Activated naive CD8-positive, alpha-beta T cell treated with anti-CD3 and anti-CD28 coated beads, Interleukin-2, amount 10 ng/mL, durations not matched to agents 7 days and 5 days (primary cell): ENCODE measurements at regions of chr3 and their contacts with region 1.

Region 1: GRCh38 chr3:50350527-50351322 is at the starts of genes CYB561D2 and NPRL2:
- DNase-seq: peak; percentile 99
- ATAC-seq: peak; percentile 90
- H3K4me3 Mint-ChIP-seq: peak within 1 kb of the TSS; percentile 90
- H3K27ac Mint-ChIP-seq: peak within 1 kb of the TSS; percentile 93
- H3K4me1 Mint-ChIP-seq: peaks cover 46% of the 10 kb centered on the region
- H3K27me3 Mint-ChIP-seq: no peaks in the 10 kb centered on the region
- total RNA-seq, gene CYB561D2: 35.0 to 38.9 TPM
- total RNA-seq, gene NPRL2: 55.8 to 58.2 TPM

Region 2: GRCh38 chr3:50275996-50276761 is 74.5 kb before region 1 on chr3:
- POLR2A ChIA-PET with region 1: no interaction called
- DNase-seq: peak; percentile 60
- ATAC-seq: no peak
- H3K4me3 Mint-ChIP-seq: peak overlapping the region; percentile 50
- H3K27ac Mint-ChIP-seq: no peak overlapping the region
- H3K4me1 Mint-ChIP-seq: peaks cover 25% of the 10 kb centered on the region
- H3K27me3 Mint-ChIP-seq: peaks cover 40% of the 10 kb centered on the region

Region 3: GRCh38 chr3:50327943-50328691 is 22.6 kb before region 1 on chr3 and contains the start of gene TUSC2:
- POLR2A ChIA-PET with region 1: interaction called, 14 read pairs
- DNase-seq: peak; percentile 95
- ATAC-seq: peak; percentile 87
- H3K4me3 Mint-ChIP-seq: peak within 1 kb of the TSS; percentile 95
- H3K27ac Mint-ChIP-seq: peak within 1 kb of the TSS; percentile 88
- H3K4me1 Mint-ChIP-seq: peaks cover 23% of the 10 kb centered on the region
- H3K27me3 Mint-ChIP-seq: no peaks in the 10 kb centered on the region
- total RNA-seq, gene TUSC2: 20.2 to 20.8 TPM

Region 4: GRCh38 chr3:50365080-50365841 is 14.5 kb after region 1 on chr3:
- POLR2A ChIA-PET with region 1: interaction called, 15 read pairs
- DNase-seq: peak; percentile 93
- ATAC-seq: peak; percentile 99
- H3K4me3 Mint-ChIP-seq: peak overlapping the region; percentile 83
- H3K27ac Mint-ChIP-seq: peak overlapping the region; percentile 86
- H3K4me1 Mint-ChIP-seq: peaks cover 5% of the 10 kb centered on the region
- H3K27me3 Mint-ChIP-seq: no peaks in the 10 kb centered on the region